ENCODE measurements at regions of chrX and their contacts with region 1.

Region 1: GRCh38 chrX:14916017-14916674 is 42.9 kb downstream of the MOSPD2 start:
- DNase-seq: no peak
- H3K4me3 ChIP-seq: no peak overlapping the region
- H3K27ac ChIP-seq: no peak overlapping the region
- H3K4me1 ChIP-seq: no peaks in the 10 kb centered on the region
- CTCF ChIP-seq: no peak

Region 2: GRCh38 chrX:14842696-14843095 is 73.5 kb before region 1 on chrX:
- CTCF ChIA-PET with region 1: no interaction called
- POLR2A ChIA-PET with region 1: no interaction called
- intact Hi-C with region 1: loop called (anchors 10 kb)
- DNase-seq: no peak
- H3K4me3 ChIP-seq: no peak overlapping the region
- H3K27ac ChIP-seq: no peak overlapping the region
- H3K4me1 ChIP-seq: no peaks in the 10 kb centered on the region
- CTCF ChIP-seq: no peak

Measured in OCI-LY7 (cell line).